ENCODE measurements at regions of chr11 and their contacts with region 1.

Region 1: DNA sequence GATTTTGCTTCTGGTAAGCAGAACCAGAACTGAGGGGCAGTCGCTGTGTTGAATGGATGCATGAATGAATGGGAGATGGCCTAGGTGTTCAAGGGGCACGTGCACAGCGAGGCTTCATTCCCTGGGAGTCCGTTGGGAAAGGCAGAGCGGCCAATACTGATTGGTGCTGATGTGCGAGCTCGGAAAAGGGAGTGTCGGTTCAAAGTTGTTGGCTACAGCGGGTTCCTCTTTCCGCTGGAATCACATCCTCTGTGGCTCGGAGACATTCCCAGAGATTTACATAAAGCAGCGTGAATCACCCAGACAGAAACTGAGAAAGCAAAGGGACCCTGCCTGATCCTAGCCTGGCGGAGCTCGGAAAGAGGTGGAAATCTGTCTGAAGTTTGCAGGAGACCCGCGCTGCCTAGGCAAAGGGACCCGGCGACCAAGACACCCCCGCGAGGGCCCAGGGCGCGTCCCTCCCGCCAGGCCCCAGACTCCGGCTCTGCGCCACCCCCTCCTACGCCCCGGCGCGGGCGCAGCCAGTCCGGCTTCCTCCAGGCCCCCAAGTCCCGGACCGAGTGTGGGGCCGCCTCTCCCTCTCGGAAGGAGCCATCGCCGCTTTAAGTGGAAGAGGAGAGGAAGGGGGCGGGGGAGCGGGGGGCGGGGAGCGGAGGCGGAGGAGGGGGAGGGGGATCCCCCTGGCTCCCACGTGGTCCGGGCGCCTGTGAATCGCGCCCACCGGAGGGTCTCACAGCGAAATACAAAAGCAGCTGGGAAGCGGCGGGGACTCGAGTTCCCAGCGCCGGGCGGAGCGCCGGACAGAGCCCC is at the start of gene FJX1:
- DNase-seq: peak; percentile 90
- H3K4me3 ChIP-seq: peak within 1 kb of the TSS; percentile 73 to 91 (median 81)
- H3K27ac ChIP-seq: peak within 1 kb of the TSS; percentile 80
- H3K4me1 ChIP-seq: peaks cover 54% of the 10 kb centered on the region
- H3K27me3 ChIP-seq: no peaks in the 10 kb centered on the region
- CTCF ChIP-seq: no peak
- total RNA-seq, gene FJX1: 38.5 to 53.8 TPM

Region 2: DNA sequence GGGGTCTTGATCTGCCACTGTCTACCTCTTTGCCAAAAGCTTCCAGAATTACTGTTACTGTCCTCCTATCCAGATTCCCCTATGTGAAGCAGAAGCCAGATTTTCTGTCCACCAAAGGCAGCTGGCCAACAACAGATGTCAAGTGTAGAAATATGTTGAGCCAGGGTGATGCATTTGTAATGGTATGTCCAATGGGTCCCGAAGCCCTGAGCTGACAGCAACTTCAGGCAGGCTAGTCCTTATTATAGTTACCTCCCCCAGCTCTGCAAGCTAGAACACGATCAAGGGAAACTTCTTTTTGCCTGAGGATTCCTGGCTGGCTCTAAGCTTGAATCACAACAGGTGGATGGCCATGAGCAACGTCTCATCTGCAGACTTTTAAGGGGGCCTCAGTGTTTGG is 102.7 kb before region 1 on chr11:
- CTCF ChIA-PET with region 1: no interaction called
- dilution Hi-C with region 1: no loop called
- in situ Hi-C with region 1: no loop called
- intact Hi-C with region 1: loop called (anchors 1 kb)
- DNase-seq: peak; percentile 93
- H3K4me3 ChIP-seq: no peak overlapping the region
- H3K27ac ChIP-seq: no peak overlapping the region
- H3K4me1 ChIP-seq: peaks cover 39% of the 10 kb centered on the region
- H3K27me3 ChIP-seq: no peaks in the 10 kb centered on the region
- CTCF ChIP-seq: no peak

Region 3: GRCh38 chr11:35541621-35542375 is 76.1 kb before region 1 on chr11:
- CTCF ChIA-PET with region 1: no interaction called
- dilution Hi-C with region 1: no loop called
- in situ Hi-C with region 1: no loop called
- intact Hi-C with region 1: no loop called
- DNase-seq: no peak
- H3K4me3 ChIP-seq: no peak overlapping the region
- H3K27ac ChIP-seq: no peak overlapping the region
- H3K4me1 ChIP-seq: peaks cover 15% of the 10 kb centered on the region
- H3K27me3 ChIP-seq: no peaks in the 10 kb centered on the region
- CTCF ChIP-seq: no peak

Region 4: DNA sequence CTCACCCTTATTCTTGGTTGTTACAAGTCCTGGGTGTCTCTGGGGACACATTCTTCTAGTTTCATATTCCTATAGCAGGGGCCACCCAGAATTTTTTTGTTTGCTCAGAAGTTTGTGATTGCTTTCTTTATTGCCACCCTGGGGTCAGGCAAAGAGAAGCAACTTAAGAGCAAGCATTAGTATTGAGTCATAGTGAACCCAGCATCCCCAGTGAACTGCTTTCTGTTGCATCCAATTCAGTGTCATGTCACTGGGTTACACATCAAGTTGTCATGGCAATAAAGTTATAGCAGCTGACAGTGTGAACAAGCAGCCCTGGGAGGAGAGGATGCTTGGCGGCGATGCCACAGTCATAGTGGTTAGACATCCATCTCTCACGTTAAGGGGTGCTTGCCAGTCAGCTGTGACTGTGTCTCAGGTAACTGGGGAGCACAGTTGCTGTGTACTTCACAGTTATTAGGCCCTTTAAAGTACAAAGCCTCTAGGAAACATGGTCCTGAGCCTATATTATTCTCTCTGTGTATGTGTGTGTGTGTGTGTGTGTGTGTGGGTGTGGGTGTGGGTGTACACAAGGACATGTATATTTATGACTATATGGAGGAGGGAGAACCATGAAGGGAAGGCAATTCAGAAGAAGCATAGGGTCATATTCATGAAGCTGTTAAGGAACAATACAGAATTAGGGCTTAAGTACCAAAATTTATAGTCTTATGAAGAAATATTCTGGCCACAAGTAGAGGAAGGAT is 97.2 kb after region 1 on chr11:
- CTCF ChIA-PET with region 1: no interaction called
- dilution Hi-C with region 1: loop called (anchors 5 kb)
- in situ Hi-C with region 1: no loop called
- intact Hi-C with region 1: loop called (anchors 1 kb)
- DNase-seq: peak; percentile 32
- H3K4me3 ChIP-seq: no peak overlapping the region
- H3K27ac ChIP-seq: no peak overlapping the region
- H3K4me1 ChIP-seq: no peaks in the 10 kb centered on the region
- H3K27me3 ChIP-seq: no peaks in the 10 kb centered on the region
- CTCF ChIP-seq: no peak

Region 5: GRCh38 chr11:35822815-35823495 is 205.1 kb after region 1 on chr11:
- CTCF ChIA-PET with region 1: interaction called, 12 read pairs
- dilution Hi-C with region 1: no loop called
- in situ Hi-C with region 1: loop called (anchors 10 to 25 kb)
- intact Hi-C with region 1: loop called (anchors 1 kb)
- DNase-seq: no peak
- H3K4me3 ChIP-seq: no peak overlapping the region
- H3K27ac ChIP-seq: no peak overlapping the region
- H3K4me1 ChIP-seq: peaks cover 3% of the 10 kb centered on the region
- H3K27me3 ChIP-seq: no peaks in the 10 kb centered on the region
- CTCF ChIP-seq: no peak

Region 6: GRCh38 chr11:36056160-36056751 is 438.4 kb after region 1 on chr11:
- CTCF ChIA-PET with region 1: no interaction called
- dilution Hi-C with region 1: no loop called
- in situ Hi-C with region 1: loop called in 1 of 2 experiments (anchors 25 kb)
- intact Hi-C with region 1: loop called (anchors 1 kb)
- DNase-seq: peak; percentile 24
- H3K4me3 ChIP-seq: no peak overlapping the region
- H3K27ac ChIP-seq: no peak overlapping the region
- H3K4me1 ChIP-seq: no peaks in the 10 kb centered on the region
- H3K27me3 ChIP-seq: no peaks in the 10 kb centered on the region
- CTCF ChIP-seq: peak; percentile 64 to 78

Region 7: DNA sequence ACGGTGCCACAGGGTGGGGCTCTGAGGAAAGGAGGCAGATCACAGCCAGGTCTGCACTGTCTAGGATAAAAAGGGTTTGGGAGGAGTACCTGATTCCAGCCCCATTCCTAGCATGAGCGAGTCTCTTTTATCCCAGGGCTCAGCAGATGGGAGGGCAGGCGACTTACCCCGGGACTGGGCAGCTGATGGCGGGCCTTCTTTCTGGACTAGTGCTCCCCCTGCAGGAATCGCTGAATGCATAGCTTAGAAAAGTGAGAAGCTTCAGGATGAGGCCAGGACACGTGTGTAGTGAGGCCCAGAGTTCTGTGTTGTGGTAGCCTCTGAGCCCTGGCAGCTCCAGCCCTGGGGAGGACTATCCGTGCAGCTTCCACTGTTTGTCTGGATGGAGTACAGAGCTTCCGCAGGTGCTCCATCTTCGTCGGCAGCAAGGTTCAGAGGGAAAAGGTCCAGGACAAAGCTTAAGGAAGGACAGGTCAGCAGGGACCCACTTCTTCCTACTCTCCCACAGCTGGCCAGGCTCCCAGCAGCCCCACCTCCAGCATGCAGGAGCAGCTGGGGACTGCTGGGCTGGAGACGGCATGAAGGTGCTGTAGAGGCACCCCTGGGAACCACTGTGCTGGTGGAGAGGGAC is 641.0 kb after region 1 on chr11:
- CTCF ChIA-PET with region 1: no interaction called
- dilution Hi-C with region 1: no loop called
- in situ Hi-C with region 1: loop called in 1 of 2 experiments (anchors 5 kb)
- intact Hi-C with region 1: no loop called
- DNase-seq: peak; percentile 35
- H3K4me3 ChIP-seq: no peak overlapping the region
- H3K27ac ChIP-seq: no peak overlapping the region
- H3K4me1 ChIP-seq: peaks cover 9% of the 10 kb centered on the region
- H3K27me3 ChIP-seq: no peaks in the 10 kb centered on the region
- CTCF ChIP-seq: peak; percentile 36 to 47

Region 8: GRCh38 chr11:36478700-36479329 is 860.9 kb after region 1 on chr11:
- CTCF ChIA-PET with region 1: no interaction called
- dilution Hi-C with region 1: no loop called
- in situ Hi-C with region 1: no loop called
- intact Hi-C with region 1: loop called (anchors 10 kb)
- DNase-seq: peak; percentile 27
- H3K4me3 ChIP-seq: no peak overlapping the region
- H3K27ac ChIP-seq: no peak overlapping the region
- H3K4me1 ChIP-seq: peaks cover 4% of the 10 kb centered on the region
- H3K27me3 ChIP-seq: no peaks in the 10 kb centered on the region
- CTCF ChIP-seq: peak; percentile 57 to 65

Measured in mammary epithelial cell (primary cell).